ENCODE measurements at regions of chr5 and their contacts with region 1.

Region 1: GRCh38 chr5:671459-672328 is 21.5 kb downstream of the TPPP start:
- DNase-seq: peak; percentile 92
- H3K4me3 ChIP-seq: peak overlapping the region; percentile 28 to 57
- H3K27ac ChIP-seq: no peak overlapping the region
- H3K4me1 ChIP-seq: peaks cover 12 to 23% of the 10 kb centered on the region in 2 experiments; a peak in 2 of 4 replicates
- H3K27me3 ChIP-seq: no peaks in the 10 kb centered on the region
- CTCF ChIP-seq: peak; percentile 92
- EP300 ChIP-seq: no peak
- RAD21 ChIP-seq: peak; percentile 88

Region 2: DNA sequence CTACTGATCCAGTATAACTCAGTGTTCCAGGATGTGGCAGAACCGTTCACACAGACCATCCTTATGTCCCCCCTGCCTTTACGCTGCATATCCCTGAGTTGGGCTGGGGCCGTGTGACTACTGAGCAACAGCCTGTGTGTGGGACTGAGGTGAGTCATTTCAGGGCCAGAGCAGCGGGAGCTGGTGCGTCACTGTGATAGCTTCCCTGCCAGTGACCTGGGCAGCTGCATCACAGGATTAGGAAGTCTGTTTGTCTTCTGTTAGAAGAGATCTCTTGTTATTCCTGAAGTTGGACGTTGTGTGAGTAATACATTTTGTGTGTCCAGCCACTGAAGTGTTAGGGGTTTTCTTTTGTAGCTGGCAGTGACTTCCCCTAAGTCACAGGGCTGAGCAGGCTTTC is 14.1 kb before region 1 on chr5:
- CTCF ChIA-PET with region 1: interaction called, 23 read pairs
- POLR2A ChIA-PET with region 1: no interaction called
- DNase-seq: no peak
- H3K4me3 ChIP-seq: no peak overlapping the region
- H3K27ac ChIP-seq: no peak overlapping the region
- H3K4me1 ChIP-seq: no peaks in the 10 kb centered on the region
- H3K27me3 ChIP-seq: no peaks in the 10 kb centered on the region
- CTCF ChIP-seq: no peak
- EP300 ChIP-seq: no peak
- RAD21 ChIP-seq: no peak

Region 3: DNA sequence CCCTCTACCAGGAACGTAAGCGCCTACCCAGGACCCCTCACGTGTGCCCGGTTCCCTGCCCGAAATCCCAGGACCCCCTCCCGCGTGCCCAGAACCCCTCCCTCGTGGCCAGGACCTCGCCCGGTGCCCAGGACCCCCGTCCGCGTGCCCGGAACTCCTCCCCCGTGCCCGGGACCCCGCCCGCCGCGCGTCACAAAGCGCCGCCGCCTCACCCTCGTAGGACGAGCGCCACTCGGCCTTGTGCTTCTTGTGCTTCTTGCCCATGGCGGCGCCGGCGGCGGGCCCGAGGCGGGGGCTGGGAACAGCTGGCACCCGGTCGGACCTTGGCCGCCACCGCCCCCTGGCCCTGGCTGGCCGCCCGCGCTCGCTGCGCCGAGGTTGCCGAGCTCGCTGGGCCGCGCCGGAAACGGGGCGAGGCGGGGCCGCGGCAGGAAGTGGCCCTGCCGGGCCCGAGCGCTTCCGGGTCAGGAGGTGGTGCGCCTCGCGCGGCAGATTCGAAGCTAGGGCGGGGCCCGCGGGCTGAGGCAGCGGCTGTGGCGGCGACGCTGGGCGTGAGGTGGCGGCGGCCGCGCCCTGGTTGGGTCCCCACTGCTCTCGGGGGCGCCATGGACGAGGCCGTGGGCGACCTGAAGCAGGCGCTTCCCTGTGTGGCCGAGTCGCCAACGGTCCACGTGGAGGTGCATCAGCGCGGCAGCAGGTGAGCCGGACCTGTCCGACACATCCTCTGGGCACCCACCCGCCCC is 220.9 kb after region 1 on chr5 and contains the starts of genes BRD9 and TRIP13:
- CTCF ChIA-PET with region 1: interaction called, 15 read pairs
- POLR2A ChIA-PET with region 1: no interaction called
- DNase-seq: peak; percentile 98
- H3K4me3 ChIP-seq: peak within 1 kb of the TSS; percentile 88 to 92
- H3K27ac ChIP-seq: peak within 1 kb of the TSS; percentile 81 to 85
- H3K4me1 ChIP-seq: peaks cover 12 to 26% of the 10 kb centered on the region in 2 experiments; a peak in 3 of 4 replicates
- H3K27me3 ChIP-seq: no peaks in the 10 kb centered on the region
- CTCF ChIP-seq: no peak
- EP300 ChIP-seq: no peak
- RAD21 ChIP-seq: no peak
- polyA plus RNA-seq, gene BRD9: 17.5 and 19.5 TPM in 2 replicates
- polyA plus RNA-seq, gene TRIP13: 21.2 and 24.1 TPM in 2 replicates

Region 4: GRCh38 chr5:902129-902916 is 230.6 kb after region 1 on chr5:
- CTCF ChIA-PET with region 1: interaction called, 88 read pairs
- POLR2A ChIA-PET with region 1: interaction called, 4 read pairs
- DNase-seq: no peak
- H3K4me3 ChIP-seq: no peak overlapping the region
- H3K27ac ChIP-seq: no peak overlapping the region
- H3K4me1 ChIP-seq: no peaks in the 10 kb centered on the region
- H3K27me3 ChIP-seq: no peaks in the 10 kb centered on the region
- CTCF ChIP-seq: no peak
- EP300 ChIP-seq: no peak
- RAD21 ChIP-seq: no peak